GM12878 (cell line): ENCODE measurements at regions of chr1 and their contacts with region 1.

Region 1: GRCh38 chr1:38474738-38475623 is 384.6 kb downstream of the RRAGC start:
- DNase-seq: peak; percentile 97
- ATAC-seq: peak; percentile 90
- H3K4me3 ChIP-seq: peak overlapping the region; percentile 86
- H3K27ac ChIP-seq: peak overlapping the region; percentile 100
- H3K4me1 ChIP-seq: peaks cover 23% of the 10 kb centered on the region
- H3K27me3 ChIP-seq: no peaks in the 10 kb centered on the region
- CTCF ChIP-seq: no peak
- EP300 ChIP-seq: peak; percentile 58 to 71; a peak in 3 of 4 replicates
- POLR2A ChIP-seq: peak; percentile 81
- RAD21 ChIP-seq: peak; percentile 21; the same call in 1 of the 2 replicates

Region 2: DNA sequence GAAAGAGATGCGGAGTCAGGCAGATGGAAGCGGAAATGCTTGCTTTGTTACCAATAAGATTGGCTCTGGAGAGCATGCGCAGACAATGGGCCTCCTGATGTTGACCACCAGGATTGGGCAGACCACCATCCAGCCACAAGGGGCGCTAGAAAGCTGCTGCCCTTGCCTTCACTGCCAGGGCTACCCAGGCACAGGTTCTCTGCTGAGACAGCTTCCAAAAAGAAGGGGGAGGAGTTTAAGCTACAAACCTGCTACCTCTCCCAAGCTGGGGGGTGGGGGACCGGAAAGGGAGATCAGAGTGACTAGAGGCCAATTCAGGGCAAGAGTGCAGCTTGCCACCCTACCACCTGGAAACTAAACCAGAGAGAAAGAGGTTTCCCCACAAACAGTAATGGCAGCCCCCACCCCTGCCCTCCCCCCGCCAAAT is 14.9 kb after region 1 on chr1:
- CTCF ChIA-PET with region 1: interaction called, 21 read pairs
- POLR2A ChIA-PET with region 1: no interaction called
- RAD21 ChIA-PET with region 1: interaction called, 13 read pairs
- SMC1A ChIA-PET with region 1: interaction called, 5 read pairs
- in situ Hi-C with region 1: no loop called
- intact Hi-C with region 1: no loop called
- DNase-seq: no peak
- ATAC-seq: peak; percentile 90
- H3K4me3 ChIP-seq: no peak overlapping the region
- H3K27ac ChIP-seq: no peak overlapping the region
- H3K4me1 ChIP-seq: no peaks in the 10 kb centered on the region; the same call in 1 of the 2 replicates
- H3K27me3 ChIP-seq: no peaks in the 10 kb centered on the region
- CTCF ChIP-seq: peak; percentile 42 to 69 (median 60)
- EP300 ChIP-seq: no peak
- POLR2A ChIP-seq: no peak
- RAD21 ChIP-seq: peak; percentile 51

Region 3: GRCh38 chr1:38500352-38500751 is 25.4 kb after region 1 on chr1:
- CTCF ChIA-PET with region 1: interaction called, 5 read pairs
- POLR2A ChIA-PET with region 1: no interaction called
- RAD21 ChIA-PET with region 1: interaction called, 6 read pairs
- SMC1A ChIA-PET with region 1: interaction called, 15 read pairs
- in situ Hi-C with region 1: no loop called
- intact Hi-C with region 1: no loop called
- DNase-seq: no peak
- ATAC-seq: peak; percentile 57; the same call in 2 of the 3 replicates
- H3K4me3 ChIP-seq: no peak overlapping the region
- H3K27ac ChIP-seq: no peak overlapping the region
- H3K4me1 ChIP-seq: peaks cover 4% of the 10 kb centered on the region
- H3K27me3 ChIP-seq: no peaks in the 10 kb centered on the region; a peak in 1 of 4 replicates
- CTCF ChIP-seq: peak in 2 of 3 experiments; percentile 53 to 58; a peak in 4 of 6 replicates
- EP300 ChIP-seq: no peak
- POLR2A ChIP-seq: no peak
- RAD21 ChIP-seq: peak; percentile 32

Region 4: GRCh38 chr1:38527373-38527966 is 52.5 kb after region 1 on chr1:
- CTCF ChIA-PET with region 1: interaction called, 7 read pairs
- POLR2A ChIA-PET with region 1: interaction called, 16 read pairs
- RAD21 ChIA-PET with region 1: interaction called, 14 read pairs
- SMC1A ChIA-PET with region 1: interaction called, 28 read pairs
- in situ Hi-C with region 1: no loop called
- intact Hi-C with region 1: no loop called
- DNase-seq: peak; percentile 83
- ATAC-seq: peak; percentile 99
- H3K4me3 ChIP-seq: no peak overlapping the region
- H3K27ac ChIP-seq: peak overlapping the region; percentile 57
- H3K4me1 ChIP-seq: peaks cover 13% of the 10 kb centered on the region
- H3K27me3 ChIP-seq: no peaks in the 10 kb centered on the region
- CTCF ChIP-seq: peak in 1 of 3 experiments; percentile 21; a peak in 1 of 6 replicates
- EP300 ChIP-seq: no peak; a peak in 1 of 4 replicates
- POLR2A ChIP-seq: no peak
- RAD21 ChIP-seq: no peak

Region 5: DNA sequence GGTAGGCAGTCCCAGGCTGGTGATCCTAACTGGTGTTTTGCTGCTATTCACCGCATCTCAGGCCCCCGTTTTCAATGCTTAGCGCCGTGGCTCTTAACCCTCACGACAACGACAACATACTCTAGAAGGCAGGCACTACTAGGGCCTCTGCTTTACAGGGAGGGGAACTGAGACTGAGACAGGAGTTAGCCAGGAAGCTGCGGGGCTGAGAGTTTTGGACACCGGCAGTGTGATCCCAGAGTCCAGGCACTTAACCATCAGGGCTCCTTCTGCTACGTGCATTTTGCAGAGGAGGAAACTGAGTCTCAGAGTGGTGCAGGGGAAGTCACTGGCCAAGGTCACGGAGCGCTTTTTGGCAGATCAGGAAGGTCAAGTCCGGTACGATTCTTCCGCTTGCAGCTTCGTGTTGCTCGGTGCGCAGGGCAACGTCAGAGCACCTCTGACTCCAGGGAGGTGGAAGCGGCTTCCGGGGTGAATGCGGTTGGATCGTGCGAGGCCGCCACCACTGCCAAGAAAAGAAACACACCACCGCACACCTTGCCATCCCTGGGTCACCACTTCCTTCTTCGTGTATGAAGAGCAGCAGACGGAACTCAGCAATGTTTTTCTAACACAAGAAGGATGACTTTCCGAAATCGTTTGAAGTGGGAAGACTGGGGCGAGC is 84.3 kb after region 1 on chr1:
- CTCF ChIA-PET with region 1: interaction called, 3 read pairs
- POLR2A ChIA-PET with region 1: interaction called, 18 read pairs
- RAD21 ChIA-PET with region 1: interaction called, 16 read pairs
- SMC1A ChIA-PET with region 1: interaction called, 13 read pairs
- in situ Hi-C with region 1: no loop called
- intact Hi-C with region 1: no loop called
- DNase-seq: peak; percentile 84
- ATAC-seq: peak; percentile 84
- H3K4me3 ChIP-seq: peak overlapping the region; percentile 9; the same call in 1 of the 2 replicates
- H3K27ac ChIP-seq: peak overlapping the region; percentile 87
- H3K4me1 ChIP-seq: peaks cover 45% of the 10 kb centered on the region
- H3K27me3 ChIP-seq: no peaks in the 10 kb centered on the region
- CTCF ChIP-seq: no peak
- EP300 ChIP-seq: peak; percentile 88 to 91
- POLR2A ChIP-seq: no peak; the same call in 1 of the 2 replicates
- RAD21 ChIP-seq: no peak

Region 6: DNA sequence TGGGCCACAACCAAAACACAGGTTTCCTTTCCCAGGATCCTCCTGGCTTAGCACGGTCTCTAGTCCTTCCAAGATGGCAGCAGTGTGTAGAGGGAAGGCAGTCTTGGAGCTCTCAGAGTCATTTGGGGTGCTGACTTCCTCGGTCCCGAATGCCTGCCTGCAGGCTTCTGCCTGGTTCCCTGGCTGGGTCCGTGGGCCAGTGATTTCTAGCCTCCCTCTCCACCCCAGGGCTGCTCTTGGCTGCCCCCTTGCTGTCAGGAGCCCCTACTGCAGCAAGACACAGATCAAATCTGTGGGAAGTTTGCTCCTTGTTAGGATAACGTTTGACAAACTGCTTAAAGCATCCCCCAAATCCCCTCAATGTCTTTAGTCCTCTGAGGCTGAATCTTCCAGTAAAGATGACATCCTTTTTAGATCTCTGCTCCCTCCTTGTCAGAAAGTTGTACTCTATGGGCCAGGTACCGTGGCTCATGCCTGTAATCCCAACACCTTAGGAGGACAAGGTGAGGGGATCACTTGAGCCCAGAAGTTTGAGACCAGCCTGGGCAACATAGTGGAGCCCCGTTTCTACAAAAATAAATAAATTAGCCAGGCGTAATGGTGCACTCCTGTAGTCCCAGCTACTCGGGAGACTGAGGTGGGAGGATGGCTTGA is 112.1 kb after region 1 on chr1:
- CTCF ChIA-PET with region 1: interaction called, 3 read pairs
- POLR2A ChIA-PET with region 1: no interaction called
- RAD21 ChIA-PET with region 1: no interaction called
- SMC1A ChIA-PET with region 1: interaction called, 8 read pairs
- in situ Hi-C with region 1: no loop called
- intact Hi-C with region 1: loop called (anchors 5 kb)
- DNase-seq: peak; percentile 17
- ATAC-seq: peak; percentile 91
- H3K4me3 ChIP-seq: no peak overlapping the region
- H3K27ac ChIP-seq: no peak overlapping the region
- H3K4me1 ChIP-seq: peaks cover 3% of the 10 kb centered on the region; the same call in 1 of the 2 replicates
- H3K27me3 ChIP-seq: 0 out of 4 replicates have a peak, but pooled peaks cover 0 to 1% of the 10 kb centered on the region in 2 experiments
- CTCF ChIP-seq: peak; percentile 92 to 99 (median 97)
- EP300 ChIP-seq: no peak
- POLR2A ChIP-seq: no peak
- RAD21 ChIP-seq: peak; percentile 96